SK-N-SH (cell line): ENCODE measurements at regions of chr14 and their contacts with region 1.

Region 1: DNA sequence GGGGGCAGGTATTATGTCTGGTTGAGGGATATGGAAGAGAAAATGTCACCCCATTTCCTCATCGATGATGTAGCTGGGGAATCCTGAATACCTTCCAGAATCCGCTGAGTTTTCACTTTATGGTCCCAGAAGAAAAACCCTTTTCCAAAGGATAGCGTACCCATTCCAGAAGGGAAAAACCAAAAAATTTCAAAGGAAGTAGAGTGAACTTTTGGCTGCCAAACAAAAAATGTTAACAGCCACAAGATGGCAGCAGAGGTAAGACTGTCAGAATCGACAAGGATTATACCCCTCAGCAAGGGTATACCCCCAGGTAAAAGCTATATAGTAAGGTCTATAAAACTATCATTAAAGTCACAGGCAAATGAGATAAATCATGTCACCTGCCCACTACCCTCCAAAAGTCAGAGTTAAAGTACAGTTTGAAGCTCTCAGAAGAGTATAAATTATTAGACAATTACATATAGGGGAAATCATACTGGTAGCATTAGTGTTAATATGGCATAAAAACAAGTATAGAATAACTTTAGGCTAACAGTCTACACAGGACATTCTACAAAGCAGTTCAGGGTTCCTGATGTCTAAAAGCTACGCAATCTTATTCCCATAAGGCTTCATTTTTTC is 18.0 kb downstream of the ACIN1 start:
- DNase-seq: peak; percentile 48
- H3K4me3 ChIP-seq: no peak overlapping the region
- H3K27ac ChIP-seq: 0 out of 4 replicates have a peak overlapping the region, but pooled peaks of 1 of the 2 experiments have one; percentile 75
- H3K4me1 ChIP-seq: peaks cover 6 to 30% of the 10 kb centered on the region in 2 experiments
- H3K27me3 ChIP-seq: no peaks in the 10 kb centered on the region
- CTCF ChIP-seq: peak; percentile 80
- EP300 ChIP-seq: no peak
- RAD21 ChIP-seq: peak; percentile 41

Region 2: DNA sequence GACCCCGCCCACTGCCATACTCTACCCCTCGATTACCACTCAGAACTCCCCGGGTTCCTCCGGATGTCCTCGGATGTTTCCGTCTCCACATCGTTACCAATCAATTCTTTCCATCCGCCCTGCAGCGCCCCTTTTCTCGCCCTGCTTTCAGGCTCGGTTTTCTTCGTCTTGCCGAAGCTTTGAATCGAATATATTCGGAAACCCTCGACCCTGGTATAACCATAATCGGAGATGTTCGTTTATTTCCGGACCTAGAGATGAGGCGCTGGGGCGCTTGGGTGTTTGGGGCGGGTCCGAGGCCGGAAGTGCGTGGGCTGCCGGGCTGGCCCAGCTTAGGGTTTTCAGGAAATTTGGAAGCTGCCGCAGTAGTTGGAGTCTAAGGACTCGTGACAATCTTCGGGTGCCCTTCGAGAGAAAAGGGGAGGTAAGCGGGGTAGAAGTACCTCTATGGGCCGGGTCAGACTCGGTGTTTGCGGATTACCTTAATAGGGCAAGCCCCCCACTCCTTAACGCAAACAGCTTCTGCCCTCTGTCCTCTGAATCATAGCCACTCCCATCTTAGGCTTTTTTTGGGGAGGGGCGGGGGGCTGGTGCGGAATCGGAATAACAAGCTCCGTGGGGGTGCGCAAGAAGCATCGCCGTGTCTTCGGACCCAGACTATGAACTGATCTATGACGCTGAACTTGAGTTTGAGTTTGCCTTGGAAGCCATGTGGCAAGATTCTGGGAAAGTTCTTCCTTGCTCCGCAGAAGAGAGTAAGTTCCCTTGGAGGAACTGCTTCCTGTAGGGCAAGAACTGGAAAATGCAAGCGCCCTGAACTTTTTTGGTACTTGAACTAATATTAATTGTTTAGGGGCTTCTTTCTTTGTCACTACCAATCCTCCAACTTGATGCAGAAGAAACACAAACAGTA is 18.6 kb after region 1 on chr14 and contains the start of gene C14orf119:
- CTCF ChIA-PET with region 1: interaction called, 73 read pairs
- POLR2A ChIA-PET with region 1: interaction called, 7 read pairs
- DNase-seq: peak; percentile 97
- H3K4me3 ChIP-seq: peak within 1 kb of the TSS; percentile 77 to 94
- H3K27ac ChIP-seq: peak within 1 kb of the TSS; percentile 93 to 96
- H3K4me1 ChIP-seq: peaks cover 7 to 20% of the 10 kb centered on the region in 2 experiments; a peak in 3 of 4 replicates
- H3K27me3 ChIP-seq: no peaks in the 10 kb centered on the region
- CTCF ChIP-seq: no peak
- EP300 ChIP-seq: no peak
- RAD21 ChIP-seq: no peak
- polyA plus RNA-seq, gene C14orf119: 55.2 and 73.3 TPM in 2 replicates